ENCODE measurements at regions of chr5 and their contacts with region 1.

Region 1: GRCh38 chr5:116032094-116032517 is at the start of gene ARL14EPL:
- DNase-seq: peak; percentile 19
- H3K4me3 ChIP-seq: no peak within 1 kb of the TSS
- H3K27me3 ChIP-seq: no peaks in the 10 kb centered on the region
- CTCF ChIP-seq: peak; percentile 46
- polyA plus RNA-seq, gene ARL14EPL: not detected in 2 replicates

Region 2: DNA sequence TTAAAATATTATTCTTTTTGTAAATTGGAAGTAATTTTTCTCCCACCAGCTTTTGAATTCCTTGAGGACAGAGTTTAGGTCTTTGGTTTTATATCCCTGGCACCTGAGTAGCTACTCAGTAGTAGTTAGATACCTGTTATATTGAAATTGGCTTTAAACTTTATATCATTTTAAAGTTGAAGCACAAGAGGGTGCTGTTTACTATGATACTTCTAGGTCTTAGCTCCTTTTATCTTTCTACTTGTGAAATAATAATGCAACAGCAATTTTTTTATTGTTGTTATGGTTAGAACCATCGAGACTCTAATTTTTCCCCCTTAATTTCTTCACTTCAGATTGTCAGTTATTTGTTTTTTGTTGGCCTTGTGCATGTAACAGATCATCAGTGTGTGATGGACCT is 144.1 kb before region 1 on chr5:
- CTCF ChIA-PET with region 1: interaction called, 10 read pairs
- POLR2A ChIA-PET with region 1: no interaction called
- DNase-seq: peak; percentile 7
- H3K4me3 ChIP-seq: no peak overlapping the region
- H3K27me3 ChIP-seq: no peaks in the 10 kb centered on the region
- CTCF ChIP-seq: peak; percentile 23; the same call in 1 of the 2 replicates

Region 3: DNA sequence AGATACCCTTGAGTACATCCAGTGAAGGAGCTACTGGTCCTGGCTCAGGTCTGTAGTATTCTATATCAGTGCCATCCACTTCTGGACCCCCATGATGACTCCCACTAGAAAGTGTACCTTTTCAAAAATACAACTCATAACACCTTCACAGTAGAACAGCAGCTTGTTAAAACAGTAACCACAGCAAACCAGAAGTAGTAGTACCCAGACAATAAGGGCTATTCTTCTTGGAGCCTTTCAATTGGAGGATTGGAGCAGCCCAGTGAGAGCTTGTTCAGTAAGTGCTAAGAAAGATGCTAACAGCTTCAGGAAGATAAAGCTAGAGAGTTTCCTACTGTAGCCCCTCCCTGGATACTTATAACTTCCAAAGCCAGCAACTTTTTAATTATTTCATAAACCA is 10.3 kb after region 1 on chr5:
- CTCF ChIA-PET with region 1: interaction called, 3 read pairs
- POLR2A ChIA-PET with region 1: interaction called, 17 read pairs
- DNase-seq: no peak
- H3K4me3 ChIP-seq: no peak overlapping the region
- H3K27me3 ChIP-seq: peaks cover 4% of the 10 kb centered on the region; the same call in 1 of the 2 replicates
- CTCF ChIP-seq: no peak

Measured in BJ (cell line).